ENCODE measurements at regions of chr1 and their contacts with region 1.

Region 1: DNA sequence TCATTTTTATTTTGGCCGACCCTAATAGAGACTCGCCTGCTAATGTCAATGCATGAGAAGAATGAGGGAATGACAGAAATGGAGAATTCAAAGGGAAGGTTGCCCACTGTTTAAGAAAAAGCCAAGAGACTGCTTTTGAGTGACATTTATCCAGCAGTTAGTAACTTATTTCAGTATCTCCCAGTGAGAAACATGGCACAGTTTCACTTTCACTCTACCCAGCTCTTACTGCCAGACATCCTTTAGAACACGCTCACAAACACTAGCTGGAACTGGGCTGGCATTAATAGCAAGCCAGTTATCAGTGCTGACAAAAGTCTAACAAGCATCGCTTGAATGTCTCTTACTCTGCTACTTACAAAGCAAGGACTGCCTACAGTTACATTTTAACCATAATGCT is 8.5 kb downstream of the GGPS1 start:
- DNase-seq: no peak
- H3K4me3 ChIP-seq: no peak overlapping the region
- H3K27ac ChIP-seq: no peak overlapping the region
- H3K4me1 ChIP-seq: peaks cover 7% of the 10 kb centered on the region
- H3K27me3 ChIP-seq: no peaks in the 10 kb centered on the region
- CTCF ChIP-seq: no peak

Region 2: GRCh38 chr1:235304549-235305451 is 32.1 kb before region 1 on chr1:
- CTCF ChIA-PET with region 1: no interaction called
- POLR2A ChIA-PET with region 1: no interaction called
- intact Hi-C with region 1: no loop called
- DNase-seq: no peak
- H3K4me3 ChIP-seq: no peak overlapping the region
- H3K27ac ChIP-seq: peak overlapping the region; percentile 19; the same call in 1 of the 2 replicates
- H3K4me1 ChIP-seq: no peaks in the 10 kb centered on the region
- H3K27me3 ChIP-seq: no peaks in the 10 kb centered on the region
- CTCF ChIP-seq: no peak

Region 3: GRCh38 chr1:235317168-235317567 is 19.7 kb before region 1 on chr1:
- CTCF ChIA-PET with region 1: no interaction called
- POLR2A ChIA-PET with region 1: no interaction called
- intact Hi-C with region 1: no loop called
- DNase-seq: no peak
- H3K4me3 ChIP-seq: no peak overlapping the region
- H3K27ac ChIP-seq: no peak overlapping the region
- H3K4me1 ChIP-seq: no peaks in the 10 kb centered on the region
- H3K27me3 ChIP-seq: no peaks in the 10 kb centered on the region
- CTCF ChIP-seq: no peak

Region 4: GRCh38 chr1:235375919-235376605 is 39.2 kb after region 1 on chr1:
- CTCF ChIA-PET with region 1: no interaction called
- POLR2A ChIA-PET with region 1: interaction called, 36 read pairs
- intact Hi-C with region 1: no loop called
- DNase-seq: no peak
- H3K4me3 ChIP-seq: no peak overlapping the region
- H3K27ac ChIP-seq: no peak overlapping the region
- H3K4me1 ChIP-seq: no peaks in the 10 kb centered on the region
- H3K27me3 ChIP-seq: no peaks in the 10 kb centered on the region
- CTCF ChIP-seq: no peak

Region 5: GRCh38 chr1:235448616-235449015 is 111.7 kb after region 1 on chr1:
- CTCF ChIA-PET with region 1: interaction called, 10 read pairs
- POLR2A ChIA-PET with region 1: no interaction called
- intact Hi-C with region 1: no loop called
- DNase-seq: no peak
- H3K4me3 ChIP-seq: no peak overlapping the region
- H3K27ac ChIP-seq: no peak overlapping the region
- H3K4me1 ChIP-seq: peaks cover under 1% of the 10 kb centered on the region; the same call in 1 of the 2 replicates
- H3K27me3 ChIP-seq: no peaks in the 10 kb centered on the region
- CTCF ChIP-seq: no peak

Region 6: GRCh38 chr1:235791532-235792060 is 454.7 kb after region 1 on chr1:
- CTCF ChIA-PET with region 1: no interaction called
- POLR2A ChIA-PET with region 1: no interaction called
- intact Hi-C with region 1: no loop called
- DNase-seq: no peak
- H3K4me3 ChIP-seq: no peak overlapping the region
- H3K27ac ChIP-seq: peak overlapping the region; percentile 44
- H3K4me1 ChIP-seq: peaks cover 15% of the 10 kb centered on the region
- H3K27me3 ChIP-seq: no peaks in the 10 kb centered on the region
- CTCF ChIP-seq: no peak